Left ventricle myocardium superior (tissue), 1 donor: ENCODE measurements at regions of chr1 and their contacts with region 1.

Region 1: GRCh38 chr1:227437495-227438008 is 119.3 kb upstream of the CDC42BPA start:
- DNase-seq: no peak
- ATAC-seq: peak; percentile 67

Region 2: DNA sequence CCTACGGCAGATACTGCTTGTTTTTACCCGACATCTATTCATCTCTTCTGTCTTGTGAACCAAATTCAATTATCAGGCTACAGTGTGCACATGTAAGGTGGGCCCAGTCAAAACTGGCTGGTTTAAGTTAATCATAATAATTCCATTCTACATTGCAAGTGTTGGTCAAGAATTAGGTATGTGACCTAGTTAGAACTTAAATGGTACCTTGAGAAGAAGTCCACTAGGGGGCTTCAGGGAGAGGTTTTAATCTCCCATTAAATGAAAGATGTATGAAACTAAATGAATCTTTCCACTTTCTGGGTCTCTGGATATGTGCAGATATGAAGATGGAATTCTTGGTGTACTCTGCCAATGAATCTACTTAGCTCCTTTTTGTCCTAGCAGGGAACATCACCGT is 306.4 kb before region 1 on chr1:
- intact Hi-C with region 1: loop called (anchors 5 kb)
- DNase-seq: no peak
- ATAC-seq: peak; percentile 28

Region 3: DNA sequence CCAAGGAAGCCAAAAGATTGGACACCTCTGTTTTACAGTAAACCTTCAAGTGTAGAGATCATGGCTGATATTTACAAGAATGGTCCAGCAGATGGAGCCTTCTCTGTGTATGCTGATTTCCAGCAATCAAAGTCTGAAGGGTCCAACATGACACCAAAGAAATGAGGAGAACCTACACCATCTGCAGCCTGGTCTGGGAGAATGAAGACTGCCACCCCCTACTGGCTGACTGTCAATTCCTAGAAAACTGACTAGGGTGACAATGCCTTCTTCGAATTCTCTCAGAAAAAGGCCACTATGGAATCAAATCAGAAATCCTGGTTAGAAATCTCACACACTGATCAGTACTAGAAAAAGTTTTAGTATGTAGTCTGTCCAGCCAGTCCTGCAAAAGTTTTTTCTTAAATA is 202.6 kb before region 1 on chr1:
- intact Hi-C with region 1: loop called (anchors 10 kb)
- DNase-seq: no peak
- ATAC-seq: peak; percentile 72

Region 4: DNA sequence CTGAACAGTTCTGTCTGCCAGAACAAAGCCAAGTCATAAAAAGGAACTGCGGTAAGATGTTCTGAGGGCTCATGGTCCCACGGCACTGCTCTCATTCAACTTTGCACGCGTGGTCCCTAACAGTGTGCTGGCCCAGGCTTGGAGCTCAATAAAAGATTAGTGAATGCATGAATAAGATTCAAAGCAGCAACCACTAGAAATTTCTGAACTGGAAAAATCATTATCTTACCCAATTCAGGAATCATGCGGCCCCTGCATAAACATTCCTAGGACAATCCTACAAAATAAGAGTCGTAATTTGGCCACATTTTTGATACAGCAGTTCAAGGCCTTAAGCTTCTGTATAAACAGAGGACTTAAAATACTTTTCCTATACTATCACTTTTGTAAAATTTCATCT is 106.9 kb before region 1 on chr1:
- intact Hi-C with region 1: no loop called
- DNase-seq: no peak
- ATAC-seq: peak; percentile 35